ENCODE measurements at regions of chr21 and their contacts with region 1.

Region 1: GRCh38 chr21:42593007-42593806 is 60.2 kb upstream of the PDE9A start:
- DNase-seq: no peak
- H3K4me3 ChIP-seq: no peak overlapping the region
- H3K27ac ChIP-seq: no peak overlapping the region
- H3K27me3 ChIP-seq: peaks cover 2% of the 10 kb centered on the region
- CTCF ChIP-seq: peak; percentile 60

Region 2: DNA sequence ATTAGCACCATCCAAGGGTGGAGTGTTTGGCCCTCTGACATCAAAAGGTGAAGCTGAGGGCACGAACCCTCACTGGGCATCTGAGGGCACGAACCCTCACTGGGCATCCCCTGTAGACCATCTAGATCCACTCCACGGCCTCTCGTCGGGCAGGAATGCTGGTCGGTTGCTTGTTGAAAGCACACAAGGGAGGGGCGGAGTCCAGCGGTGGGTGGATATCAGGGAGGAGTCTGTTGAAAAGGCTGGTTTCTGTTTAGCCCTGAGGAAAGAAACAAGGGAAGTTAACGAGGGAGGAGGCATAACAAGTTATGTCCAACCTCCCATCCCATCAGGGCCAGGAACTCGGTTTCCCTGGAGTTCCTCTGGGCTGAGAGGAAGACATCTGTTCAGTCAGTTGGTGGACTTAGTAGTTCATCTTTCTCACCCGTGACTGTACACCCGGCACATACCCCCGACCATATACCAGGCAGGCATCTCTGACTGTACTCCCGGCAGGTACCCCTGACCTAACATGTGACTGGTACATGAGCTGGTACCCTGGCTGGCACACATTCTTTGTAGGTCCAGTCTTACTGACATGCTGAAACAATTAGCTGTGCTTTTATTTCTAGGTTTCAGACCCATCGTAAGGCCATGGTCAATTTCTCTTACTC is 28.1 kb after region 1 on chr21:
- CTCF ChIA-PET with region 1: no interaction called
- POLR2A ChIA-PET with region 1: no interaction called
- DNase-seq: no peak
- H3K4me3 ChIP-seq: no peak overlapping the region
- H3K27ac ChIP-seq: no peak overlapping the region
- H3K27me3 ChIP-seq: no peaks in the 10 kb centered on the region
- CTCF ChIP-seq: no peak

Region 3: GRCh38 chr21:42818328-42818749 is 225.1 kb after region 1 on chr21:
- CTCF ChIA-PET with region 1: interaction called, 40 read pairs
- POLR2A ChIA-PET with region 1: no interaction called
- DNase-seq: no peak
- H3K4me3 ChIP-seq: no peak overlapping the region
- H3K27ac ChIP-seq: no peak overlapping the region
- H3K27me3 ChIP-seq: peaks cover 5% of the 10 kb centered on the region
- CTCF ChIP-seq: peak; percentile 78

Measured in AG04450 (cell line).